SK-MEL-5 (cell line): ENCODE measurements at regions of chr3 and their contacts with region 1.

Region 1: DNA sequence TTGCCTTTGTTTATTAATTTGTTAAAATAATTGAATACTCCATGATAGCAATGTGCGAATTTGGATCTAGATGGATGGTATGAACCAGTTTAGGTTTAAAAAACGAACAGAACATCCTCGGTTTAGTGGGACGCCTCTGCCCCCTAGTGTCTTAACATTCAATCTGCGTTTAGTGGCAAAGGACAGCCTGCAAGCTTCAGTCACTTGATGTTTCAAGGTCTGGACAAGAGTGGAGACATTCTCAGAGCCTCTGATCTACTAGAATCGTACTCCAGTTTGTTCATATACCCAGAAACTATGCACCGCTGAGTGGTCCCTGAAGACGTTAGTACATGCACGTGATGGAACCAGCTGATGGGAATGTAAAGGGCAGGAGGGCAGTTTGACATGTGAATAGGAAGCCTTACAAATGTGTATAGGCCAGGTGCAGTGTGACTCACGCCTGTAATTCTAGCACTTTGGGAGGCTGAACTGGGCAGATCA is 17.8 kb upstream of the ATP13A4 start:
- DNase-seq: peak; percentile 91

Region 2: DNA sequence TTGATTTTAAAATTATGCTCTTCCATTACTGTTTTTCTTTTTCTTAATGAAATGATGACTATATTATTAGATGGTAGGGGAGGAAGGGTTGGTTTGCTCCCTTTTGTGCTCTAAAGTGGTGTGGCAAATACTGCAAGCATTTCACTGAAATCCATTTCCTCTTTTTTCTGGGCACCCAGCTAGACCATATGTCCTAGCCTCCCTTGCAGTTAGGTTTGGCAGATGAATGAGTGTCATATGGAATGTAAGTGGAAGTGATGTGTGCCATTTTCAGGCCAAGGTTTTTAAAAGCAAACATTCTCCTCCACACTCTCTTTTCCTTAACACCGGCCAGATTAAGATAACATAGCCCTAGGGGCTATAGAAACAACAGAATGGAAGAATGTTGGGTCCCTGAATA is 1208.2 kb before region 1 on chr3:
- in situ Hi-C with region 1: no loop called
- DNase-seq: no peak

Region 3: DNA sequence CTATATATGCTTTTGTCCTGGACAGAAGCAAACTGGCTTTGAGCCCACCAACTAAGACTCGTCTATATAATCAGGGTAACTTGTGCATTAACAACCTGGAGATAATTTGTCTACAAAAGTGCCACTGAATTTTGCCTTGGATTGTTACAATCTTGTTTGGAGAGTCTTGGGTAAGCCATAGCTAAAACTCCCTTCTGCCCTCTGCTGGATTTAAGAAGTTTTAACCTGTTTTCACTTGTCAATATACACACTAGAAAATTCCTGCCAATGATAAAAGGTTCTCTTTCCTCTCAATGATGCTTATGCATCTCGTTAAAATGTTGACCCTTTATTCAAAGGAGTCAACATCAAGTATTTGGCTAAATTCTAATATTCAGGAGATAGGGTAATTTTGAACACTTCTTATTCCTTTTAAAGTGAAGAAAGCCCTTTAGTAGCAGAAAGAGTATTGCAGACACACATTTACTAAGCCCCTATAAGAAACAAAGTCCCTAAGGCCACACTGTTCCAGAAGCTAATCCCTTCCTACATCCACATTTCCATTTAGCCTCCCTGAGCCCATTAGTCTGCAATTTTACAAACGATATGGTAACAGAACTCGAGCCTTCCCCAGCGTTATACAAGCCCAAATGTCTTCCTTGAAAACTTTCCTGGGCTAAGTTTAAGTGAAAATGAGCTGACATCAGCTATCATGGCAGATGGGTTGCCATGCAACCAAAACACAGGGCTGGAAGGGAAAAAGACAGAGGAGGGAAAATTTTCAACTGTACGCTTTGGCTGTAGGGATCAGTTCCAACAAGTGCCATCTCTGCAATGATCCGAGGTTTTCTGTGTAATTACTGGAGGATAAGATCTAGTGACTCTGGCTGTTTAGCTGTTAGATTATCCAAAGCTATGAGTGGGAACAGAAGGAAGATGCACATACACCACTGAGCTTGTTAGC is 769.2 kb before region 1 on chr3:
- in situ Hi-C with region 1: loop called (anchors 25 kb)
- DNase-seq: peak; percentile 73

Region 4: GRCh38 chr3:193732391-193732790 is 159.9 kb after region 1 on chr3:
- in situ Hi-C with region 1: no loop called
- DNase-seq: no peak

Region 5: GRCh38 chr3:194141415-194142155 is 569.1 kb after region 1 on chr3:
- in situ Hi-C with region 1: no loop called
- DNase-seq: no peak